ENCODE measurements at regions of chr11 and their contacts with region 1.

Region 1: GRCh38 chr11:78039919-78040671 is 17.0 kb upstream of the KCTD14 start:
- DNase-seq: peak; percentile 39
- H3K4me3 ChIP-seq: 0 out of 2 replicates have a peak overlapping the region, but pooled peaks have one; percentile 12
- H3K27me3 ChIP-seq: no peaks in the 10 kb centered on the region
- CTCF ChIP-seq: no peak

Region 2: GRCh38 chr11:78078218-78079167 is 38.4 kb after region 1 on chr11:
- CTCF ChIA-PET with region 1: no interaction called
- POLR2A ChIA-PET with region 1: interaction called, 10 read pairs
- DNase-seq: no peak
- H3K4me3 ChIP-seq: peak overlapping the region; percentile 76
- H3K27me3 ChIP-seq: no peaks in the 10 kb centered on the region
- CTCF ChIP-seq: no peak

Region 3: DNA sequence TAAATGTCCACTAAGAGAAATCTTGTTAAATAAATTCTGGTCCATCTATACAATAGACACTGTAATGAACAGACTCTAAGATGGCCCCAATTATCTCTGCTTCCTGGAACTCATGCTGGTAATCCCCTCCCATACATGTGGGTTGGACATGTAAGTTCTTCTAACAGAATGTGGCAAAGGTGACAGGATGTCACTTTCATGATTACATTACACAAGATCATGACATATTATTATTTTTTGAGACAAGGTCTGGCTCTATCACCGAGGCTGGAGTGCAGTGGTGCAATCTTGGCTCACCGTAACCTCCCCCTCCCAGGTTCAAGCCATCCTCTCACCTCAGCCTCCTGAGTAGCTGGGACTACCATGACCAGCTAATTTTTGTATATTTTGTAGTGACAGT is 54.2 kb after region 1 on chr11:
- CTCF ChIA-PET with region 1: no interaction called
- POLR2A ChIA-PET with region 1: interaction called, 11 read pairs
- DNase-seq: no peak
- H3K4me3 ChIP-seq: no peak overlapping the region
- H3K27me3 ChIP-seq: no peaks in the 10 kb centered on the region
- CTCF ChIP-seq: no peak